Right ventricle myocardium inferior (tissue), 1 donor: ENCODE measurements at regions of chr7 and their contacts with region 1.

Region 1: GRCh38 chr7:90211391-90212148 is at the start of gene STEAP2:
- DNase-seq: peak; percentile 94
- ATAC-seq: peak; percentile 100
- total RNA-seq, gene STEAP2: 10.8 TPM

Region 2: DNA sequence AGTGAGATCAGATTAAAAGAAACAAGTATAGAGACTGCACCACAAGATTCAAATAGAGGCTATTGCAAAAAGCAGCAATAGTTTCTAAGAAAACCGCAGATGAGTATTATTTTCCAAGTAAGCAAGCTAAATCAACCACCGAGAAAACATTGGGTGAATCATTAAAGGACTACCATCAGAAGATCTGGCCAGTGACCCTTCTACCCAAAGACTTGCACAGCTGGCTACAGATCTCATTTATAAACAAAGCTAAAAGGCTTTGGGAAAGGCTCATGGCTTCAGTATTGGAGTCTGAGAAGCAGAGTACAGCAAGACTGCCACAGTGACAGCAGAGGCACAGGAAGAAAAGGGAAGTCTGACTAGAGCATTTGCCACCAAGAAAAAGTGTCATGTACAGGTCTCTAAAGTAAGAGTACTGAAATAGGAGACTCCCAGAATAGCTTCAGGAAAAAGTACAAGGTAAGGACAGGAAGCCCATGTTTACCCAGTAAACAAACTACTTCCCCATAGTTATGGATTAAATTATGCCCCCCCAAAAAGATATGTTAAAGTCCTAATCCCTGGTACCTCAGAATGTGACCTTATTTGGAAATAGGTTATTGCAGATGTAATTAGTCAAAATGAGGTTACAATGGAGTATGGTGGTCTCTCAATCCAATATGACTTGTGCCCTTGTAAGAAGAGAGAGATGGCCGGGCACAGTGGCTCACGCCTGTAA is 38.3 kb before region 1 on chr7:
- intact Hi-C with region 1: loop called (anchors 2 kb)
- DNase-seq: no peak
- ATAC-seq: no peak

Region 3: DNA sequence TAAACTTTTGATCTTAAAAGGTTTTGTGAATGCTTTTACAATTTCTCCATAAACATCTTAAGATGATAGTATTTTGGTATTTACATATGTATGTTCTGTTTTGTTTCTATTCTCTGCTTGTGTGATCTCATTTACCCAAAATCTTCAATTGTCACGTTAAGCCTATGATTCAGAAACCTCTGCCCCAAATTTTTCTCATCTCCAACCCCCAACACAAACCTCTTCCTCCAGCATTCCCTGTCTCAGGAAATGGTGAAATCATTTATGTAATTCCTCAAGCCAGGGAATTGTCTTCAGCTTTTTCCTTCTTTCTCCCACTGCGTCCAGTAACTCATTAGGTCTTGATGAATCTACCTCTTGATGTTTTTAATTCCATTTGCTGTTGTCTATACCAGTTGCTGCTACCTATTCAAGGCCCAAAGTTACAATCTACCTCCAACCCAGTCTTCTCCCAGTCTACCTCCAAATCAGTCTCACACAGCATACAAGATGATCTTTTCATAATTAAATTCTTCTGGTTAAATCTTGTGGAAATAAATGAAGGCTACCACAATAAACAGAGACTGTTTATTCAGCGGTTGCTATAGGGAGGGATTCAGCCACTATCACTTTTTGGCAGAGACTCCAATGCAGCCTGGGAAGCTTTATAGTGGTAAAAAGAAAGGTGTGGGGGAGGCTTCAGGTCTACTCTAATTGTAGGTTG is 39.2 kb after region 1 on chr7:
- intact Hi-C with region 1: loop called (anchors 5 kb)
- DNase-seq: no peak
- ATAC-seq: no peak

Region 4: DNA sequence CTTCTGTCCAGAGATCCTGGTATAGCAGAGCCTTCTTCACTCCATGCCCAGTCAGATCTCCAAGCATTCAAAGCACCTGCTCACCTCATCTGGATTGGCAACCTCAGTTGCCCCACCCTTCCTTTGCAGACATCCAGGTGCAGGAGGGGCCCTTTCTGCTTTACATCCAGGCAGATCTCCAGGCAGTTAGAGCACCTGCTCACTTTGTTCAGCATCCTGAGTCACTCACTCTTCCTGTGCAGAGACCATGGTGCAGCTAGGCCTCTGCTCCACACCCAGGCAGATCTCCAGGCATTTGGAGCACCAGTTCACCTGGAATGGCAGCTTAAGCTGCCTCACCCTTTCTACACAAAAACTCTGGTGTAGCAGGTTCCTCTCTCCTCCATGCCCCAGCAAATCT is 537.7 kb after region 1 on chr7:
- intact Hi-C with region 1: no loop called
- DNase-seq: no peak
- ATAC-seq: no peak